Activated CD4-positive, alpha-beta T cell treated with anti-CD3 and anti-CD28 coated beads, Interleukin-2, amount 10 ng/mL, durations not matched to agents 24 days and 14 days (primary cell): ENCODE measurements at regions of chr1 and their contacts with region 1.

Region 1: GRCh38 chr1:109655601-109656519 is at the start of gene GSTM4:
- DNase-seq: peak; percentile 92
- H3K4me3 Mint-ChIP-seq: peak within 1 kb of the TSS; percentile 96
- H3K27ac Mint-ChIP-seq: peak within 1 kb of the TSS; percentile 89
- H3K4me1 Mint-ChIP-seq: peaks cover 19% of the 10 kb centered on the region
- H3K27me3 Mint-ChIP-seq: peaks cover 28% of the 10 kb centered on the region
- total RNA-seq, gene GSTM4: 6.8 and 9.9 TPM in 2 replicates

Region 2: DNA sequence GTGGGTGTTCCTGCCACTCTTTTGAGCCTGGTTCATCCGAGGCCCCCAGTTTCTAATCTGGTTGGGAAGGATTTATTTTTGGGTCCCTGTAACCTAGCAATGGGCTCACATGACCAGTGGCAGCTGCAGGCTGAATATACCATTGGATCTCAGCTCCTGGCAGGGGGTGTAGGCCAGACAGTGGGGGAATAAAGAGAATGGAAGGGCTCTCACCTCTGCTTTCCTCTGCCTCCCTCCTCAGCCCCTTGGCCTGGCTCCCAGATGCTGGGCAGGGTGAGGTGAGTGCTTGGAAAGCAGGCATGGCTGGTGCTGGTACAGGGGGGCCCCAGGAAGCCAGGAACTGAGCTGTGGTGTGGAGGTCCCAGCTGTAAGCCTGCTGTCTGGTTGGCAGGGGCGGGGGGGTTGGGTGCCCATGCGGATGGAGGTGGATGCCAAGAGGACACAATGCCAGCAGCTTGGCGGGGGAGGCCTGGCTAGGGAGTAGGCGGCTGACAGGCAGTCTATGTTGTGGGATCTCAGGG is 119.8 kb before region 1 on chr1:
- intact Hi-C with region 1: no loop called
- DNase-seq: no peak
- H3K4me3 Mint-ChIP-seq: no peak overlapping the region
- H3K27ac Mint-ChIP-seq: no peak overlapping the region
- H3K4me1 Mint-ChIP-seq: peaks cover 19% of the 10 kb centered on the region
- H3K27me3 Mint-ChIP-seq: peaks cover 4% of the 10 kb centered on the region

Region 3: GRCh38 chr1:109556563-109556962 is 99.3 kb before region 1 on chr1:
- intact Hi-C with region 1: no loop called
- DNase-seq: no peak
- H3K4me3 Mint-ChIP-seq: no peak overlapping the region
- H3K27ac Mint-ChIP-seq: no peak overlapping the region
- H3K4me1 Mint-ChIP-seq: peaks cover 22% of the 10 kb centered on the region
- H3K27me3 Mint-ChIP-seq: no peaks in the 10 kb centered on the region

Region 4: GRCh38 chr1:109773146-109773899 is 117.5 kb after region 1 on chr1:
- intact Hi-C with region 1: loop called (anchors 5 kb)
- DNase-seq: peak; percentile 91
- H3K4me3 Mint-ChIP-seq: no peak overlapping the region
- H3K27ac Mint-ChIP-seq: no peak overlapping the region
- H3K4me1 Mint-ChIP-seq: peaks cover 20% of the 10 kb centered on the region
- H3K27me3 Mint-ChIP-seq: peaks cover 3% of the 10 kb centered on the region

Region 5: DNA sequence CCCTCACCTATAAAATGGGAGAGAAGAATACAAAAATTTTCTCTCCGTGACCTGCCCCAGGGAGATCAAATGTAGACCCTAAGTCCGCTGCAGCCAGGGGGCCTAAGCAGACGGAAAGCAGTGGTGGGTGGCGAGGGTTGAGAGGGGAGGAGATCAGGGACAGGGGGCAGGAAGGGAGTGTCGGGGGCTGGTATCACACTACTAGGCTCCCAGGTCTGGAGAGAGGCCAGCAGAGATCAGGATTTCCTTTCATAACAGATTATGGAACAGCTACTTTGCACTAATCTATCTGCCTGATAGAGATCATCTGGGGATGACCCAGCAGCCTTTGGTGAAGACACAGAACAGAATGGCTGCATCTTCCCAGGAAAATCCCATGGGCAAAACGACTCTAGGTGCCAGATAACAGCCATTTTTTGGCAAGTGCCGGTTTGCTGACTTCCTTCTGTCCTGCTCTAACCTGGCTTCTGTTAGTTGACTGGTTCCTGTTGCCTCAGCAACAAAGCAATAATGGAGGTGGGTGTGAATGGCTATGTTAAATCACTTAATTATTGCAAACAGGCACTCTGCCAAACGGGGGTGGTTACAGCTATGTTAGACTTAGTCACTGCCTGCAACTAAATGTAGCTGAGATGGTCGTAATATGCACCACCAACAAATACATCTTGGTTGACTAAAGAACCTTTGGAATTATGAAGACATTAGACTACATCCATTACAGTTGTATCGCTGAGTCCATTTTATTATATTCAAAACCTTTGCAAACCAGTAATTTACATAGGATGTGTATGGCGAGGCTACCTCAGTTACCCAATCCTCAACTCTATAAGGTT is 137.8 kb after region 1 on chr1:
- intact Hi-C with region 1: no loop called
- DNase-seq: no peak
- H3K4me3 Mint-ChIP-seq: no peak overlapping the region
- H3K27ac Mint-ChIP-seq: peak overlapping the region; percentile 78
- H3K4me1 Mint-ChIP-seq: peaks cover 71% of the 10 kb centered on the region
- H3K27me3 Mint-ChIP-seq: no peaks in the 10 kb centered on the region

Region 6: DNA sequence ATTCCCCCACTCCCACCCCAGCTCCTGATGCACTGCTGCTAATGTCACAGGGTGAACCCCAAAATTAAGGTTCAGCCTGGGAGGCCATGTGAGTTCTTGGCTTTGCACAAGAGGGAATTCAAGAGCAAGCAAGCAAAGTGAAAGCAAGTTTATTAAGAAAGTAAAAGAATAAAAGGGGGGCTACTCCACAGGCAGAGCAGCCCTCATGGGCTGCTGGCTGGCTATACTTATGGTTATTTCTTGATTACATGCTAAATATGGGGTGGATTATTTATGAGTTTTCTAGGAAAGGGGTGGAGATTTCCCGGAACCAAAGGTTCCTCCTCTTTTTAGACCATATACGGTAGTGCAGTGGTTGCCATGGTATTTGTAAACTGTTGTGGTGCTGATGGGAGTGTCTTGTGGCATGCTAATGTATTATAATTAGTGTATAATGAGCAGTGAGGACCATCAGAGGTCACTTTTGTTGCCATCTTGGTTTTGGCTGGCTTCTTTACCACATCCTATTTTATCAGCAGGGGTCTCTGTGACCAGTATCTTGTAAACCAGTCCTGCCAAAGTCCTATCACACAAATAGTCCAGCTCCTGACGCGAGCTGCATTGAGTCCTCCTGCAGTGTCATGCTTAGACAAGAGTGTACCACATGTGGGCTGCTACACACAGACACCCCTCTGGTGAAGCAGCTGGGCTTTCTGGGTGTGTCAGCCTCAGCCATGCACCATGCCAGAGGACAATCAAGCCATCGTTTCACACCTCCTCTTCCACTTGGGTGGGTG is 208.4 kb after region 1 on chr1:
- intact Hi-C with region 1: no loop called
- DNase-seq: peak; percentile 70
- H3K4me3 Mint-ChIP-seq: no peak overlapping the region
- H3K27ac Mint-ChIP-seq: no peak overlapping the region
- H3K4me1 Mint-ChIP-seq: peaks cover 8% of the 10 kb centered on the region
- H3K27me3 Mint-ChIP-seq: peaks cover 12% of the 10 kb centered on the region